ENCODE measurements at regions of chr3 and their contacts with region 1.

Region 1: GRCh38 chr3:153927107-153927506 is 194.1 kb upstream of the ARHGEF26 start:
- DNase-seq: no peak
- H3K4me3 ChIP-seq: no peak overlapping the region
- H3K27ac ChIP-seq: no peak overlapping the region
- H3K27me3 ChIP-seq: no peaks in the 10 kb centered on the region
- CTCF ChIP-seq: peak in 44 of 56 donors; percentile 9 to 64 (median 38)

Region 2: DNA sequence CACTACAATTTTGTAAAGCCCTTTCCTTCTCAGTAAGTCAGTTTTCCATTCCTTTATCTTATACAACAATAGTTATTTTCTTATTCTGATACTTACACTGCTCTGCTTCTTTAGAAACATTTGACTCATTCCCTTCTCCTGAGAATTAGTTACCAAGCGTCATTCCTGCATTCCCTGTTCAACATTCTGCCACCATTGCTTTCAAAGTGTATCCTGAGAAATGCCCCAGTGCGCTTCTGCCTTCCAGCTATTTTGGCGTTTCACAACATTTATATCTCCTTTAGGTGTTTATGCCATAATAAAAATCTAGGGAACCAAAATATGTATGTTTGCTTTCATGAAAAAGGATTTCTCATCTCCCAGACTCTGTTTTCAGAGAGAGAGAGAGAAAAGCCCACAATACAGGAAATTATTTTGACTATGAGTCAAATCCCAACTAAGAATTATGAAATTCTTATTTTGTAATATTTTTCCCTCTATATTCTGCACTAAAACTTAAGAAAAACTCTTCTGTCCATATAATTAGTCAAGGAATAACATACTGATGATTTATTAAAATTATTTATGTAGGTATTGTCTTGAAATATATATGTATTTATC is 883.3 kb before region 1 on chr3:
- intact Hi-C with region 1: loop called in 1 of 2 experiments (anchors 10 kb)
- DNase-seq: no peak
- H3K4me3 ChIP-seq: peak overlapping the region in 11 of 59 donors; percentile 36 to 56 (median 46)
- H3K27ac ChIP-seq: no peak overlapping the region
- H3K27me3 ChIP-seq: peaks cover 0 to 5% (median 0%) of the 10 kb centered on the region in 45 donors
- CTCF ChIP-seq: no peak

Region 3: GRCh38 chr3:153679714-153680113 is 247.4 kb before region 1 on chr3:
- intact Hi-C with region 1: no loop called
- DNase-seq: no peak
- H3K4me3 ChIP-seq: no peak overlapping the region
- H3K27ac ChIP-seq: no peak overlapping the region
- H3K27me3 ChIP-seq: peaks cover 0 to 4% (median 0%) of the 10 kb centered on the region in 45 donors
- CTCF ChIP-seq: no peak

Region 4: GRCh38 chr3:153866901-153867300 is 60.2 kb before region 1 on chr3:
- intact Hi-C with region 1: no loop called
- DNase-seq: no peak
- H3K4me3 ChIP-seq: no peak overlapping the region
- H3K27ac ChIP-seq: no peak overlapping the region
- H3K27me3 ChIP-seq: peaks cover 0 to 6% (median 0%) of the 10 kb centered on the region in 45 donors
- CTCF ChIP-seq: no peak

Region 5: DNA sequence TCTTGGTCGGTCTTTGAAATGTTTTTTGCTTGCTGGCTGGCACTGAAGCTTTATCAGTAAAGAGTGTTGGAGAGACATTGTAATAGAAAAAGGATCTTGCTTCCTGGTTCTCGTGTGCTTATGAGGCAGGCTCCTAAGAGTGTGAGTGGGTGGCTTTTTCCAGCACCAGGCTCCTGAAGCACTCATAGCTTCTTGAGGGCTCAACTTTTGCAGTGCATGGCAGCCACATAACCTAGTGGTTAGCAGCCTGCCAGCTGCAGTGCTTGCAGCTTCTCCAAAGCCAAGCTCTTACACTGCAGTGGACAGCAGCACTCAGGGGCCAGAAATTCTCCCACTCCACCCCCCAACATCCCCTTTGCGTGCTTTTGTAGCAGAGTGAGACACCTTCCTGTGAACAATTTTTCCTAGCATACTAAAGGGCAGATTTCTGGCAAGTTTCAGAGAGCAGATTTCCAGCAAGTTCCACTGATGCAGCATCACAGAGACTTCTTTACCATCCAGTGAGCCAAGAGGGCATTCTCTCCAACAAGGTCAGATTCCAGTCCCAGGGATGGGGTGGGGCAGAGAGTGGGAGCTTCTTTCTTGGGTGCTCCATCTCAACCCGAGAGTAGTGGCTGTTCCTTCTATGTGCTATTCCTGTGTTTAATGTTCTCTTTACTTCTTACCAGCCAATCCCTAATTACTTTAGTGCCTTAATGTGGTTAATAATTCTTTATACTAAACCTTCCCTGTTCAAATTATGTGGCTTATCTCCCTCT is 178.3 kb after region 1 on chr3:
- intact Hi-C with region 1: no loop called
- DNase-seq: peak in 1 of 10 donors; percentile 37
- H3K4me3 ChIP-seq: no peak overlapping the region
- H3K27ac ChIP-seq: peak overlapping the region in 6 of 59 donors; percentile 4 to 30 (median 16)
- H3K27me3 ChIP-seq: peaks cover 0 to 3% (median 0%) of the 10 kb centered on the region in 45 donors
- CTCF ChIP-seq: no peak

Region 6: GRCh38 chr3:154862265-154862664 is 935.2 kb after region 1 on chr3:
- intact Hi-C with region 1: no loop called
- DNase-seq: no peak
- H3K4me3 ChIP-seq: no peak overlapping the region
- H3K27ac ChIP-seq: no peak overlapping the region
- H3K27me3 ChIP-seq: peaks cover 0 to 3% (median 0%) of the 10 kb centered on the region in 45 donors
- CTCF ChIP-seq: no peak

Measured in dorsolateral prefrontal cortex (tissue), 120 donors.